B cell (primary cell): ENCODE measurements at regions of chr19 and their contacts with region 1.

Region 1: DNA sequence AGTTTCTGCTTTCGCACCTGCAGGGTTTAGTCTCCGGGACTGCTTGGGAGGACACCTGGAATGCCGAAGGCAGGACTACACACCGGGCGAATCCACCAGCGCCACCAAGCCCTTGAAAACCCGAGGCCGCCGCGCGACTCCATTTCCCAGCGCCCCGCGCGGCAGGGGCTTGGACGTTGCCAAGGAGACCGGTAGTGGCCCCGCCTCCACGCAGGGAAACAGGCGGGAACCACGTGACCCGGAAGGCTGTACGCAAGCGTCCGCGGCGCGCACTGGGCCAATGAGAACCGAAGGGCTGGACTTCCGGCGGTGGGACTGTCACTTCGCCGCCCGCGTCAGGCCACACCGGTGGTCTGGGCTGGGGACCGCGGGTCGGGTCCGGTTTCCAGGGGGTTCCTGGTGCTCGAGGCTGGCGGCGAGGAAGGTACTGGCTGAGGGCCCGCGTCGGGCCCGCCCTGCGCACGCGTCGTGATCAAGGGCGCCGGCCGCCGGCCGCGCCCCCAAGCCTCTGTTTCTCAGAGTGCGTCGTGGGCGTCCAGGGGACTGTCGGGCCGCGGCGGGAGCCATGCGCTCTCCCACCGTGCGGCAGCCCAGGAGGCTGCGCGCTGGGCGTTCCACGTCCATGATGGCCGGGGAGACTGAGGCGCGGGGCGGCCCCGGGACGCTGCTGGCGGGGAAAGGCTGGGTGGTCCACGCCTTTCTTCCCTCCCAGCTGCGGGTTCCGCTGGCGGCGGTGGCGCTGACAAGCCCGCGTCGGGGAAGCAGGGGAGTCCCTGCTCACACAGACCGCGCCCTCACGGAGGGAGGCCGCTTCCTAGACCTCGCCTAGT is at the start of gene ZNF324:
- DNase-seq: peak; percentile 97
- ATAC-seq: peak; percentile 96
- H3K4me3 ChIP-seq: peak within 1 kb of the TSS; percentile 34 to 91 (median 89)
- H3K4me3 Mint-ChIP-seq: peak within 1 kb of the TSS; percentile 85
- H3K27ac ChIP-seq: peak within 1 kb of the TSS; percentile 18 to 90
- H3K27ac Mint-ChIP-seq: peak within 1 kb of the TSS; percentile 85
- H3K4me1 ChIP-seq: peaks cover 8 to 25% of the 10 kb centered on the region in 2 donors
- H3K4me1 Mint-ChIP-seq: peaks cover 26% of the 10 kb centered on the region
- H3K27me3 ChIP-seq: no peaks in the 10 kb centered on the region
- H3K27me3 Mint-ChIP-seq: no peaks in the 10 kb centered on the region
- CTCF ChIP-seq: no peak
- total RNA-seq, gene ZNF324: 17.6 and 21.0 TPM in 2 replicates

Region 2: GRCh38 chr19:58386576-58387337 is 80.2 kb before region 1 on chr19 and contains the start of gene RPS5:
- CTCF ChIA-PET with region 1: no interaction called
- POLR2A ChIA-PET with region 1: no interaction called
- intact Hi-C with region 1: loop called (anchors 1 kb)
- DNase-seq: peak; percentile 98
- ATAC-seq: peak; percentile 90
- H3K4me3 ChIP-seq: peak within 1 kb of the TSS; percentile 71 to 87 (median 76)
- H3K4me3 Mint-ChIP-seq: peak within 1 kb of the TSS; percentile 97
- H3K27ac ChIP-seq: peak within 1 kb of the TSS; percentile 94 to 95
- H3K27ac Mint-ChIP-seq: peak within 1 kb of the TSS; percentile 99
- H3K4me1 ChIP-seq: peaks cover 27 to 33% of the 10 kb centered on the region in 2 donors
- H3K4me1 Mint-ChIP-seq: peaks cover 44% of the 10 kb centered on the region
- H3K27me3 ChIP-seq: no peaks in the 10 kb centered on the region
- H3K27me3 Mint-ChIP-seq: no peaks in the 10 kb centered on the region
- CTCF ChIP-seq: no peak
- total RNA-seq, gene RPS5: 1,234 and 1,311 TPM in 2 replicates

Region 3: DNA sequence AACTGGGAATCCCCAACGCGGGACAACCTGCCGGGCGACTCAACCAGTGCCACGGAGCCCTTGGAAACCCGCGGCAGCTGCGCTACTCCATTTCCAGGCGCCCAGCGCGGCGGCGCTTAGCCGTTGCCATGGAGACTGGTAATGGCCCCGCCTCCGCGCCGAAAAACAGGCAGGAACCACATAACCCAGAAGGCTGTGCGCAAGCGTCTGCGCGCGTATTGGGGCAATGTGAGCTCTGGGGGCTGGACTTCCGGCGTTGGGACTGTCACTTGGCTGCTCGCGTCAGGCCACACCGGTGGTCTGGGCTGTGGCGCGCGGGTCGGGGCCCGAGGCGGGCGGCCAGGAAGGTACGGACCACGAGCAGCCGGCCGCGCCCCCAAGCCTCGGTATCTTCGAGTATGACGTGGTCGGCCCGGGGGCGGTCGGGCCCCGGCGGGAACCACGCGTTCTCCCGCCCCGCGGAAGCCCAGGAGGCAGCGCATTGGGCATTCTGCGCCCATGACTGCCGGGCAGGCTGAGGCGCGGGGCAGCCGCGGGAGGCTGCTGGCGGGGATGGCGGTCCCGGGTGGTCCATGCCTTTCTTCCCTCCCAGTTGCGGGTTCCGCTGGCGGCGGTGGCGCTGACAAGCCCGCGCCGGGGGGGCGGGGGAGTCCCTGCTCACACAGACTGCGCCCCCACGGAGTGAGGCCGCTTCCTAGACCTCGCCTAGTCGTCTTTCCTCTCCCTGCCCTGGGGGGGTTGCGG is 15.4 kb before region 1 on chr19 and contains the start of gene ZNF324B:
- CTCF ChIA-PET with region 1: no interaction called
- POLR2A ChIA-PET with region 1: no interaction called
- intact Hi-C with region 1: loop called (anchors 1 kb)
- DNase-seq: peak; percentile 97
- ATAC-seq: peak; percentile 97
- H3K4me3 ChIP-seq: peak within 1 kb of the TSS; percentile 55 to 81 (median 73)
- H3K4me3 Mint-ChIP-seq: peak within 1 kb of the TSS; percentile 93
- H3K27ac ChIP-seq: peak within 1 kb of the TSS in 1 of 2 donors; percentile 66
- H3K27ac Mint-ChIP-seq: peak within 1 kb of the TSS; percentile 85
- H3K4me1 ChIP-seq: peaks cover 5 to 12% of the 10 kb centered on the region in 2 donors
- H3K4me1 Mint-ChIP-seq: peaks cover 20% of the 10 kb centered on the region
- H3K27me3 ChIP-seq: peaks cover 0 to 24% (median 2%) of the 10 kb centered on the region in 4 experiments
- H3K27me3 Mint-ChIP-seq: peaks cover 13% of the 10 kb centered on the region
- CTCF ChIP-seq: no peak
- total RNA-seq, gene ZNF324B: 15.0 and 17.4 TPM in 2 replicates

Region 4: DNA sequence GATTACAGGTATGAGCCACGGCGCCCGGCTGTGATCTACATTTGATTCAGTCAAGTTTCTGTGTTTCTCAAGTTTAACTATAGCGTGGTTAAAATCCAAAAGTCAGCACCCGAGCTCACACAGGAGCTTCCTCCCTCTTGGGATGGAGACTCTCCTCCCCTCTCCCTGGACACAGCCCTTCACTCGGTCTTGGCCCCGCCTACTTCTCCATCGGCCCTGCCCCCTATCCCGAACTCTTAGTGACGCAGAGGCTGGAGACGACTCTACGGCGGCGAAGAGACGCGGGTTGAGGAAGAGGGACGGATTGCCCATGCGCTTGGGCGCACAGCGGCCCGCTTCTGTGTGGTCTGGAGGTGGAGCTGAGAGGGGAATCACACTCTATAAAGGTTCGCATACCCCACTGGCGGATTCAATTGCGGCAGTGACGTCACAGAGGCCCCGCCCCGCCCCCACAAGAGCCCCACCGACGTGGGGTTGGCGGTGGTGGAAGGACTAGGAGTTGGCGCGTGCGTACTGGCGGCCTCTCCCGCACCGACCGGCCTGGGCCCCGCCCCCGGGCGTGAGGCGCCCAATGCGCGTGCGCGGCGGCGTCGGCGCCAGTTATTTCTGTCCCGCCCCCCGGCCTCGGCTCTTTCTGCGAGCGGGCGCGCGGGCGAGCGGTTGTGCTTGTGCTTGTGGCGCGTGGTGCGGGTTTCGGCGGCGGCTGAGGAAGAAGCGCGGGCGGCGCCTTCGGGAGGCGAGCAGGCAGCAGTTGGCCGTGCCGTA is 77.0 kb after region 1 on chr19 and contains the start of gene TRIM28:
- CTCF ChIA-PET with region 1: no interaction called
- POLR2A ChIA-PET with region 1: no interaction called
- intact Hi-C with region 1: loop called (anchors 2 kb)
- DNase-seq: peak; percentile 100
- ATAC-seq: peak; percentile 84
- H3K4me3 ChIP-seq: peak within 1 kb of the TSS; percentile 67 to 87 (median 82)
- H3K4me3 Mint-ChIP-seq: peak within 1 kb of the TSS; percentile 97
- H3K27ac ChIP-seq: peak within 1 kb of the TSS; percentile 96
- H3K27ac Mint-ChIP-seq: peak within 1 kb of the TSS; percentile 99
- H3K4me1 ChIP-seq: peaks cover 17 to 31% of the 10 kb centered on the region in 2 donors
- H3K4me1 Mint-ChIP-seq: peaks cover 29% of the 10 kb centered on the region
- H3K27me3 ChIP-seq: peaks cover 0 to 14% (median 0%) of the 10 kb centered on the region in 4 experiments
- H3K27me3 Mint-ChIP-seq: peaks cover 15% of the 10 kb centered on the region
- CTCF ChIP-seq: no peak
- total RNA-seq, gene TRIM28: 370 and 394 TPM in 2 replicates